ENCODE measurements at regions of chr3 and their contacts with region 1.

Region 1: GRCh38 chr3:190205739-190206138 is 85.0 kb upstream of the P3H2 start:
- DNase-seq: no peak
- H3K4me3 ChIP-seq: no peak overlapping the region
- H3K27ac ChIP-seq: no peak overlapping the region
- H3K4me1 ChIP-seq: no peaks in the 10 kb centered on the region
- H3K27me3 ChIP-seq: peaks cover 0 to 2% of the 10 kb centered on the region in 2 experiments
- CTCF ChIP-seq: no peak
- POLR2A ChIP-seq: no peak

Region 2: DNA sequence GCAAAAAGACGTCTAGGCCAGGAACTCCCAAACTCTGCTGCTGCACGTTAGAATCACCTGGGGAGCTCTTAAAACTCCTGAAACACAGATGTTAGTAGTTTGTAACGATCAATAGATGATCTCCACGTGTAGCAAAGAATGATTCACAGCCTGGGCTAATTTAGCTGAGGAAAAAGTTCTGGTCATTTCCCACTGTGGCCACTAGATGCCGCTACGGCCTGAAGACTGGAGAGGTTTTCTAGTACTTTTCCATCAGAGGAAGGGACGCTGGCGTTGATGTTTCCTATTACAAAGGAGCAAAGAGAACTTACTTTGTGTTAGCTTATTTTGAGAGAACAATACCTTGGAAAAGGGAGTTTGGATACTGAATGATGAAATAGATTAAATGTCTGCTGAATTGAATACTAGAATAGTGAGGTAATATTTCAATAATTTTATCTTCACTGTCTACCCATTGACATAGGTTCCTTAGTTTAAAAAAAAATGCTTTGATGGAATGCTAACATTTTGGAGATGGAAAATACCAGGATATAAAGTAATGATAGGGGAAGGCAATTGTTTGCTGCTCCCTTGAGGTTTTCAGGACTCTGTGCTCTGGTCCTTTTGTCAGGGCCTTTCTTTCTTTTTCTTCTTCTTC is 244.1 kb before region 1 on chr3:
- CTCF ChIA-PET with region 1: interaction called, 44 read pairs
- POLR2A ChIA-PET with region 1: no interaction called
- dilution Hi-C with region 1: loop called (anchors 25 kb)
- intact Hi-C with region 1: loop called (anchors 1 kb)
- DNase-seq: peak; percentile 89
- H3K4me3 ChIP-seq: no peak overlapping the region
- H3K27ac ChIP-seq: no peak overlapping the region
- H3K4me1 ChIP-seq: no peaks in the 10 kb centered on the region
- H3K27me3 ChIP-seq: no peaks in the 10 kb centered on the region
- CTCF ChIP-seq: peak; percentile 77 to 90
- POLR2A ChIP-seq: no peak

Region 3: GRCh38 chr3:189967254-189967865 is 238.4 kb before region 1 on chr3:
- CTCF ChIA-PET with region 1: interaction called, 44 read pairs
- POLR2A ChIA-PET with region 1: no interaction called
- dilution Hi-C with region 1: loop called (anchors 25 kb)
- intact Hi-C with region 1: loop called (anchors 1 kb)
- DNase-seq: peak; percentile 71
- H3K4me3 ChIP-seq: no peak overlapping the region
- H3K27ac ChIP-seq: no peak overlapping the region
- H3K4me1 ChIP-seq: no peaks in the 10 kb centered on the region
- H3K27me3 ChIP-seq: no peaks in the 10 kb centered on the region
- CTCF ChIP-seq: peak; percentile 58 to 63
- POLR2A ChIP-seq: no peak

Region 4: DNA sequence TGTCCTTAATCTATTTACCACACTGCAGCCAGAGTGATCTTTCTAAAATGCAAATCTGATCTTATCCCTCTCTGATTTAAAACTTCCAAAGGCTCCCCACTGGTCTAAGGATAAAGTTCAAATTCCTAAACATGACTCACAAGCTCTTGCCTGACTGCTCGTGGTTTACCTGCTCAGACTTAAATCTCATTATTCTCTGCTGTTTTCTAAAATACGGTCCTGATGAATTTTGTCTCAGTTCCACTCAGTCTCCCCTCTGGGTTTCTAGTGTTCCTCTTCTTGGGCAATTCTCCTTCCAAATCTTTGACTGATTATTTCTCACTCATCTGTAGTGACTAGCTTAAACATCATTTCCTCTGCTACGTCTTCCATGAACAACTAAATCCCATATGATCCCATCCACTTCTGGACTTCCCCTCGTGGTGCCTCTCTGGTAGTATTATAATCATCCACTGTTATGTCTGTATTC is 193.4 kb before region 1 on chr3:
- CTCF ChIA-PET with region 1: interaction called, 12 read pairs
- POLR2A ChIA-PET with region 1: no interaction called
- dilution Hi-C with region 1: no loop called
- intact Hi-C with region 1: loop called (anchors 1 kb)
- DNase-seq: peak; percentile 40
- H3K4me3 ChIP-seq: no peak overlapping the region
- H3K27ac ChIP-seq: peak overlapping the region; percentile 55
- H3K4me1 ChIP-seq: peaks cover 25% of the 10 kb centered on the region
- H3K27me3 ChIP-seq: no peaks in the 10 kb centered on the region
- CTCF ChIP-seq: no peak
- POLR2A ChIP-seq: no peak

Region 5: DNA sequence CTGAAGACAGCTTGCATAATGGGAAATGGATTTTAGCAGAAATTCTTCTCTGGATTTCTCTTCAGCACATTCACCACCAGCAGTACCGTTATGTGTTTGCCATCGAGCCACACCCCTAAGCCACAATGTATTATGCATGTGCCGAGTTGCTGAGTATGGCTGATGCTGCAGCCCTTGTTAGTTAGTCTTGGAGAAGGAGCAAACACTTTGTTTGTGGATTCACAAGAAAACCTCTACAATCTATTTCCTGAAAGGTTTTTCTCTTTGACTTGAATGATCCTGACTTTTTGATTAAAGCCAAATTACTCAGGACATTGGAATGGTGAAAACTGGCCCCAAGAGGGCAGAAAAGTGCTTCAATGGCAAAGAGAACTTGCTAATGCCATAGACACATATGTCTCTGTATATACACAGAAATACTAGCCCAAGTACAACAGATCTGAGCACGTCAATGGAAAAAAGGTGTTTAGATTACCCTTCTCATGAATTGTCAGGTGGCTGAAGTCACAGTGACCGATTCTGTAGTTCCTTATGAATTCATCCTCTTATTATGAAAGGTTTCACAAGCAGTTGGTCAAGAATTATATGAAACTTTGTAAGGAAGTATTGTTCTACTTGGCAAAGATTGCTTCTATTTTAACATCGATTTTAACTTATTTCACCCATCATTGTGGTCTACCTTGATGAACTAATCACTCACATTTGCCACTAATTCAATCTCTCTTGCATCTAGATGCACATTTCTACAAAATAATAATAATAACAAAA is 188.0 kb before region 1 on chr3:
- CTCF ChIA-PET with region 1: interaction called, 15 read pairs
- POLR2A ChIA-PET with region 1: no interaction called
- dilution Hi-C with region 1: no loop called
- intact Hi-C with region 1: loop called (anchors 1 kb)
- DNase-seq: peak; percentile 84
- H3K4me3 ChIP-seq: no peak overlapping the region
- H3K27ac ChIP-seq: no peak overlapping the region
- H3K4me1 ChIP-seq: peaks cover 3% of the 10 kb centered on the region
- H3K27me3 ChIP-seq: no peaks in the 10 kb centered on the region
- CTCF ChIP-seq: peak; percentile 28 to 47
- POLR2A ChIP-seq: no peak

Region 6: DNA sequence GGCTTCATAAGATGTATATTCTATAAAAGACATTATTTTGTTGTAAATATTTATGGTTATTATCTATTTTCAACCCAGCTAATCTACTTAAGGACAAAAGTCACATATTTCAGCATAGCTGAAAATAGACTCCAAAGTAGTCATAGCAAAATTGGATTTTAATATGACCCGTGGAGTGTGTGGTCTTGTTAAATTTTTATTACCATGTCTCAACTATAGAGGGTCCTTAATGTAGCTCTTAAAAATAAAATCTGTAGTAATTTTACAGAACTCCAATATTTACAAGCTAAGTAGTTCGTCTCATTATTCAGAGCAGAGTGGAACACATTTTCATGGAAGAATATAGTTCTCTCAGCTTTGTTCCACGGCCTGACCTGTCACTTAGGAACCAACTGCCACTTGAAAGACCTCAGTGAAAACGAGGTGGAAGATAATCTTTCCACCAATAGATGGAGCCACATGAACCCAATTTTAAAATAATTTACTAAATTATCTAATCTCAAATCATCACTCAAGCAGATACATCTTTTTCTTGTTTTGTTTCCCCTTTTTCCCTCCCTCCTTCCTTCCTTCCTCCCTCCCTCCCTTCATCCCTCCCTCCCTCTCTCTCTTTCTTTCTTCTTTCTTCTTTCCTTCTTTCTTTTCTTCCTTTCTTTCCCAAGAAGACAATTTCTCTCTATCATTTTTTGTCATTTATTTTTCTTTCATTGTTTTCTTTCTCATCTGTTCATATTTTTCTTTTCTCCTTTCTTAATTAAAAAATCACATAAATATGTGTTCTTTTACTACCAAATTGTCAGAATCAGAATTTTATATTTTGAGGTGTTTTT is 19.3 kb after region 1 on chr3:
- CTCF ChIA-PET with region 1: interaction called, 14 read pairs
- POLR2A ChIA-PET with region 1: no interaction called
- dilution Hi-C with region 1: no loop called
- intact Hi-C with region 1: no loop called
- DNase-seq: peak; percentile 58
- H3K4me3 ChIP-seq: no peak overlapping the region
- H3K27ac ChIP-seq: no peak overlapping the region
- H3K4me1 ChIP-seq: peaks cover 10% of the 10 kb centered on the region
- H3K27me3 ChIP-seq: no peaks in the 10 kb centered on the region
- CTCF ChIP-seq: peak; percentile 20 to 24
- POLR2A ChIP-seq: no peak